K562 (cell line): ENCODE measurements at regions of chr3 and their contacts with region 1.

Region 1: GRCh38 chr3:5426094-5426883 is 238.8 kb downstream of the EDEM1 start:
- DNase-seq: peak; percentile 77 to 96 (median 85)
- ATAC-seq: peak; percentile 80
- H3K4me3 ChIP-seq: no peak overlapping the region
- H3K27ac ChIP-seq: no peak overlapping the region; the same call in 2 of the 3 replicates
- H3K4me1 ChIP-seq: peaks cover 19 to 48% of the 10 kb centered on the region in 2 experiments
- H3K27me3 ChIP-seq: no peaks in the 10 kb centered on the region
- CTCF ChIP-seq: peak; percentile 89 to 99 (median 97)
- EP300 ChIP-seq: peak; percentile 51
- POLR2A ChIP-seq: no peak
- RAD21 ChIP-seq: peak; percentile 98

Region 2: GRCh38 chr3:5304789-5305683 is 121.3 kb before region 1 on chr3:
- CTCF ChIA-PET with region 1: no interaction called
- POLR2A ChIA-PET with region 1: interaction called, 3 read pairs
- in situ Hi-C with region 1: no loop called
- intact Hi-C with region 1: loop called (anchors 5 kb)
- DNase-seq: peak; percentile 56 to 70 (median 62)
- ATAC-seq: peak; percentile 94
- H3K4me3 ChIP-seq: no peak overlapping the region
- H3K27ac ChIP-seq: no peak overlapping the region
- H3K4me1 ChIP-seq: no peaks in the 10 kb centered on the region
- H3K27me3 ChIP-seq: peaks cover 15 to 19% of the 10 kb centered on the region in 2 experiments
- CTCF ChIP-seq: peak; percentile 69 to 87 (median 86)
- EP300 ChIP-seq: no peak
- POLR2A ChIP-seq: no peak
- RAD21 ChIP-seq: peak; percentile 92 to 94

Region 3: DNA sequence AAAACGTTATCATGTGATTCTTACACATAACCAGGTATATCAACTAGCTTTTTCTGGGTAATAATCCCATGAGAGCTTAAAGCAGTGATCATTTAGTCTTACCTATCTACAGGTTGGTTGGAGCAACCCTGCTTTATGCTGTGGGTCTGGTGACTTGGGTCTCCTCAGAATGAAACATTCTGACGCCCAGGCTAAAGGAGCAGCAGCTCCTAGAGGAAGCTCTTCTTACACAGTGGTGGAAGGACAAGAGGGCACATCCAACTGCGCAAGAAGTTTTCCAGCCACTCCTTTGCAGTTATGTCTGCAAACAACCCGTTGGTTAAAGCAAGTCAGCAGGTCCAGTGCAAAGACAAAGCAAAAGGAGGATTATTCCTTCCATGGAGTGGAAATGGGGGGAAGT is 138.7 kb after region 1 on chr3:
- CTCF ChIA-PET with region 1: no interaction called
- POLR2A ChIA-PET with region 1: interaction called, 11 read pairs
- in situ Hi-C with region 1: loop called (anchors 5 kb)
- intact Hi-C with region 1: loop called (anchors 1 kb)
- DNase-seq: peak; percentile 24 to 55 (median 38)
- ATAC-seq: peak; percentile 69
- H3K4me3 ChIP-seq: no peak overlapping the region
- H3K27ac ChIP-seq: peak overlapping the region; percentile 5; the same call in 1 of the 3 replicates
- H3K4me1 ChIP-seq: peaks cover 0 to 33% of the 10 kb centered on the region in 2 experiments; a peak in 3 of 5 replicates
- H3K27me3 ChIP-seq: no peaks in the 10 kb centered on the region; a peak in 1 of 5 replicates
- CTCF ChIP-seq: no peak
- EP300 ChIP-seq: no peak
- POLR2A ChIP-seq: no peak
- RAD21 ChIP-seq: no peak

Region 4: GRCh38 chr3:5731094-5731493 is 304.8 kb after region 1 on chr3:
- CTCF ChIA-PET with region 1: interaction called, 6 read pairs
- POLR2A ChIA-PET with region 1: no interaction called
- in situ Hi-C with region 1: no loop called
- intact Hi-C with region 1: loop called (anchors 1 kb)
- DNase-seq: peak; percentile 27 to 36 (median 32)
- ATAC-seq: peak; percentile 74
- H3K4me3 ChIP-seq: no peak overlapping the region
- H3K27ac ChIP-seq: no peak overlapping the region
- H3K4me1 ChIP-seq: no peaks in the 10 kb centered on the region; a peak in 3 of 5 replicates
- H3K27me3 ChIP-seq: no peaks in the 10 kb centered on the region
- CTCF ChIP-seq: peak; percentile 57 to 78 (median 67); a peak in 4 of 6 replicates
- EP300 ChIP-seq: no peak
- POLR2A ChIP-seq: no peak
- RAD21 ChIP-seq: peak; percentile 82 to 85

Region 5: DNA sequence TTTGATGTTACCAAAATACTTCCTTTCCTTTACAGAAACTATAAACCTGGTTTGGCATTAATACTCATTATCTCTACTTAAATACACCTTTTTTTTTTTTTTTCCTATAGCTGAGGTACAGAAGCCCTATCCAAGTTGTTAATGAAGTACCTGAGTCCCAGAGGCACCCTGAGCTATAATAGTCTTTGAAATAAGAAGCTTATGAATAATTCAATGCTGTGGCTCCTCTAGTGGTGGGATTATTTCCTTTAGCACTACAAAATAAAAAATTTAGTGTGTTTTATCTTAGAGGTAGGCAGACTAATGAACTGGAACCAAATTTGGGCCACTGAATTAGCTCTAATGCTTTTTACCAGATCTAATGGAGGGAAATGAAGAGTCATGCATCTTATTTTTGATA is 373.1 kb after region 1 on chr3:
- CTCF ChIA-PET with region 1: no interaction called
- POLR2A ChIA-PET with region 1: no interaction called
- in situ Hi-C with region 1: no loop called
- intact Hi-C with region 1: loop called (anchors 5 kb)
- DNase-seq: no peak
- ATAC-seq: 0 out of 3 replicates have a peak, but pooled peaks have one; percentile 31
- H3K4me3 ChIP-seq: no peak overlapping the region
- H3K27ac ChIP-seq: no peak overlapping the region
- H3K4me1 ChIP-seq: no peaks in the 10 kb centered on the region
- H3K27me3 ChIP-seq: no peaks in the 10 kb centered on the region
- CTCF ChIP-seq: peak in 1 of 3 experiments; percentile 40; a peak in 2 of 6 replicates
- EP300 ChIP-seq: no peak
- POLR2A ChIP-seq: no peak
- RAD21 ChIP-seq: no peak